ENCODE measurements at regions of chr2 and their contacts with region 1.

Region 1: GRCh38 chr2:238288650-238289573 is 502 bp upstream of the PER2 start:
- DNase-seq: peak; percentile 94 to 97
- H3K4me3 ChIP-seq: peak overlapping the region; percentile 92
- H3K4me3 Mint-ChIP-seq: peak overlapping the region; percentile 85
- H3K27ac Mint-ChIP-seq: peak overlapping the region; percentile 91
- H3K4me1 ChIP-seq: peaks cover 31% of the 10 kb centered on the region
- H3K4me1 Mint-ChIP-seq: peaks cover 10% of the 10 kb centered on the region
- H3K27me3 ChIP-seq: no peaks in the 10 kb centered on the region
- H3K27me3 Mint-ChIP-seq: no peaks in the 10 kb centered on the region
- CTCF ChIP-seq: peak; percentile 34 to 48

Region 2: GRCh38 chr2:238270606-238271005 is 18.3 kb before region 1 on chr2:
- CTCF ChIA-PET with region 1: no interaction called
- POLR2A ChIA-PET with region 1: interaction called, 6 read pairs
- intact Hi-C with region 1: loop called (anchors 1 kb)
- DNase-seq: no peak
- H3K4me3 ChIP-seq: no peak overlapping the region
- H3K4me3 Mint-ChIP-seq: no peak overlapping the region
- H3K27ac Mint-ChIP-seq: no peak overlapping the region
- H3K4me1 ChIP-seq: peaks cover 45% of the 10 kb centered on the region
- H3K4me1 Mint-ChIP-seq: peaks cover 23% of the 10 kb centered on the region
- H3K27me3 ChIP-seq: no peaks in the 10 kb centered on the region
- H3K27me3 Mint-ChIP-seq: no peaks in the 10 kb centered on the region
- CTCF ChIP-seq: no peak

Region 3: DNA sequence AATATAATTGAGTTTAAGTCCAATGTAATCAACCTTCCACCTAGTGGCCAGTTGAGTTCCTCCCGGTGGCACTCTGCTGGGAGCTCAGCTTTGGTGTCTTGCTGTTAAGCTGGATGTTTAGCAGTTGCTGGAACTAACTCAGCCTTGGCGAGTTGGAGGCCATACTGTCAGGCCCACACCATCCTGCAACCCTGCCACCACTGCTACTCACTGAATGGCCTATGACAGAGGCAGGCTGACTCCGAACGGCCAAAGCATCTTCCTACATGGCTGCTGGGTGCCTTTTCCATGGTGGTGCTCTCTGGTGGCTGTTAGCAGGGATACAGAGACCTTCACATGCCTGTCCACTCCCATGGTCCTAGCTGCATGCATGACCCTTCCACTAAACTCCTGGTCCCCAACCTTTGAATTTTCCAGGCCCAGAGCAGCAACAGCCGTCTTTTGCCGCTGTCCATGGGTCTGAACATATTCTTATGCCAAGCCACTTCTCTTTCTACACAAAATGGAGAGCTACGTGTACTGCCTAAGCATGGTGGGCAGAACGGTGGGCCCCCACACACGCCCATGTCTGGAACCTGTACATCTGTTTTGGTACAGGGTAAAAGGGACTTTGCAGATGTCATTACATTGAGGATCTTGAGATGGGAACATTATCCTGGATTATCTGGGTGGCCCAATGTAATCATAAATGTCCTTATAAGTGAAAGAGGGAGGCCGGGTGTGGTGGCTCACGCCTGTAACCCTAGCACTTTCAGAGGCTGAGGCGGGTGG is 16.4 kb after region 1 on chr2:
- CTCF ChIA-PET with region 1: no interaction called
- POLR2A ChIA-PET with region 1: no interaction called
- intact Hi-C with region 1: loop called (anchors 2 kb)
- DNase-seq: no peak
- H3K4me3 ChIP-seq: no peak overlapping the region
- H3K4me3 Mint-ChIP-seq: no peak overlapping the region
- H3K27ac Mint-ChIP-seq: no peak overlapping the region
- H3K4me1 ChIP-seq: peaks cover 14% of the 10 kb centered on the region
- H3K4me1 Mint-ChIP-seq: peaks cover 6% of the 10 kb centered on the region
- H3K27me3 ChIP-seq: no peaks in the 10 kb centered on the region
- H3K27me3 Mint-ChIP-seq: no peaks in the 10 kb centered on the region
- CTCF ChIP-seq: peak in 1 of 2 experiments; percentile 41

Measured in Caco-2 (cell line).